Mucosa of descending colon (tissue), 3 donors: ENCODE measurements at regions of chr17 and their contacts with region 1.

Region 1: DNA sequence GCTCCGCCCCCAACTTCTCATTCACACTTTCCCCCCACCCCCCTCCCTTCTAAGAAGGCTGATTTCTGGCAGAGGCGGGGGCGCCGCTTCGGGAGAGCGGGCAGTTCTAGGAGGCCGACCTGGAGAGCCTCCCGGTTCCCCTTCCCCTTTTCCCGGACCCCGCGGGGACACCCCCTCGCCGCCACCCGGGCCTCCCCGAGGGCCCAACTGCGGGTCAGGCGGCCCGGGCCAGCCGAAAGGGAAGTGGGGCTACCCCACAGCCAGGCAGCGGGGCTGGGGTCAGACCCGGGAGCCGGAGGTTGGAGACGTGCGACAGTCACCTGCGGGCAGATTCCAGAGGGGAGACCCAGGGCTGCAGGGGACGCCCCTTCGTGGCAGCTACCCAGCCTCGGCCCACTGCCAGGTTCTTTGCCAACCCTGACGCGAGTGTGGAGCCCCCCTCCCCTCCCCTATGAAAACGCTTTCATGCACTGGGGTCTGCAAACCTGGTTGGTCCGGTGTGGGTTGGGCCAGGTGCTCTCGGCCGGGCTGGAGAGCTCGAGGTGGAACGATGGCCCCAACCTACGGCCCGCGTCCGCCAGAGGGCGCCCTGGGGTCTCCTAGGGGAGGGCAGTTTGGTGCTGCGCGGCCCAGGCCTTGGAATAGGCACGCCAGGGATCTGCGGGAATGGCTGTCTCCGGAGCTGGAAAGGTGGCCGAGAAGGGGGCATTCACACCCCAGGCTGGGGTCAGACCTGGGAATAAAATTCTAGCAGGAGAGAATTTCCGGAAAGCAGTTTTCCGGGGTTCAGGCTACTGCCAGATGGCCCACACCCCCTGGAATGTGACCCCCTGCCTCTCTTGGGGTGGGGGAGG is 721 bp upstream of the SOCS3 start:
- DNase-seq: peak; percentile 96 to 98 (median 98)
- ATAC-seq: peak; percentile 78
- H3K4me3 ChIP-seq: no peak overlapping the region
- H3K4me1 ChIP-seq: peaks cover 19% of the 10 kb centered on the region
- CTCF ChIP-seq: peak; percentile 90

Region 2: DNA sequence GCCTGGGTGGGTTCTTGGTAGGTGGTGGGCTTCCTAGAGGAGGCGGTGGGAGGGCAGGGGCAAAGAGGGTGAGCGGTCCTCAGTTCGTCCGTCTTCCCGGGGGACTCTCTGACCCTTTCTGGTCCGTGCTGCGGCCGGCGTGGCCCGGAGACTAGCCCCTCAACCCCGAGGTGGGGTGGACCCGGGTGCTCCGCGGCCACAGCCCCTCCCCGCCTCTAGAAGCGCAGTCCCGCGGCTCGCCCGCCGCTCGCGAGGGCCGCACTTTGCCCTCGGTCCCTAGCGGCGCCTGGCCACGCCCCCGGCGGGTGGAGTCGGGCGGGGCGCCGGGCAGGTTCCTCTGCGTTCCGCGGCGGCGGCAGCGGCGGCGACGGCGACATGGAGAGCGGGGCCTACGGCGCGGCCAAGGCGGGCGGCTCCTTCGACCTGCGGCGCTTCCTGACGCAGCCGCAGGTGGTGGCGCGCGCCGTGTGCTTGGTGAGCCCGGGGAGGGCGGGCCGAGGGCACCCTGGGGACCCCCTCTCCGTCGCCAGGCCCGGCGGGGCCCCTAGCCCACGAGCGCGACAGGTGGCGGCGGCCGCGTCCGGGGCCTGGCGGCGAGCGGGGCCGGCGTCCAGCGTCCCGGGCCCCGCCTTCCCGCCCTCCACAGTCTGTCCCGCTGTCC is 192.2 kb before region 1 on chr17 and contains the start of gene SYNGR2:
- intact Hi-C with region 1: no loop called
- DNase-seq: peak; percentile 90 to 94 (median 92)
- ATAC-seq: peak; percentile 76
- H3K4me3 ChIP-seq: peak within 1 kb of the TSS; percentile 70
- H3K4me1 ChIP-seq: peaks cover 38% of the 10 kb centered on the region
- CTCF ChIP-seq: no peak
- total RNA-seq, gene SYNGR2: 90.4 to 202 (median 196) TPM

Region 3: GRCh38 chr17:78289802-78290363 is 70.7 kb before region 1 on chr17:
- intact Hi-C with region 1: loop called in 1 of 2 experiments (anchors 10 kb)
- DNase-seq: peak; percentile 78 to 84 (median 84)
- ATAC-seq: peak; percentile 99
- H3K4me3 ChIP-seq: no peak overlapping the region
- H3K4me1 ChIP-seq: peaks cover 5% of the 10 kb centered on the region
- CTCF ChIP-seq: peak; percentile 44

Region 4: DNA sequence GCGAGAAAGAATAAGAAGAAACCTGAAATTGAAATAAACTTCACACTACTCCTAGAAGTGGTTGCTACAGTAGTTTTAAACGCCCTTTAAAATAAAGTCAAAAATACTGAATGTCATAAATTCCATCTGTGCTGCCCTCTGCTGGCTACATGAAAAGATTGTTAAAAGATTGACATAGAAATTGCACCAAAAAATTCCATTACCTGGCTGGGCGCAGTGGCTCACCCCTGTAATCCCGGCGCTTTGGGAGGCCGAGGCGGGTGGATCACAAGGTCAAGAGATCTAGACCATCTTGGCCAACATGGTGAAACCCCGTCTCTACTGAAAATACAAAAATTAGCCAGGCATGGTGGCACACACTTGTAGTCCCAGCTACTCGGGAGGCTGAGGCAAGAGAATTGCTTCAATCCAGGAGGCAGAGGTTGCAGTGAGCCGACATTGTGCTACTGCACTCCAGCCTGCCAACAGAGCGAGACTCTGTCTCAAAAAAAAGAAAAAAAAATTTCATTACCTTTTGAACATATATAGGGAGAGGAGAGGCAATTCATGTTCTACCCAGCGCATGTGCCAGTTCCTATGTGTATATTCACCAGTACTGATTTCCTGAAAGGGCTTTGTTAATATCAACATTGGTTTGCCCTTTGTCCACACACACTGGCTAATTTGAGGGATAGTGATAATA is 384.9 kb after region 1 on chr17:
- intact Hi-C with region 1: no loop called
- DNase-seq: peak in 1 of 3 donors; percentile 61
- ATAC-seq: peak; percentile 26
- H3K4me3 ChIP-seq: no peak overlapping the region
- H3K4me1 ChIP-seq: peaks cover 27% of the 10 kb centered on the region
- CTCF ChIP-seq: no peak